ENCODE measurements at regions of chr1 and their contacts with region 1.

Region 1: GRCh38 chr1:156480411-156481192 is 20.0 kb downstream of the MEF2D start:
- DNase-seq: peak; percentile 55
- H3K4me3 ChIP-seq: no peak overlapping the region
- H3K27ac ChIP-seq: no peak overlapping the region
- H3K4me1 ChIP-seq: peaks cover 8% of the 10 kb centered on the region
- H3K27me3 ChIP-seq: no peaks in the 10 kb centered on the region
- CTCF ChIP-seq: peak; percentile 67 to 87
- POLR2A ChIP-seq: no peak

Region 2: DNA sequence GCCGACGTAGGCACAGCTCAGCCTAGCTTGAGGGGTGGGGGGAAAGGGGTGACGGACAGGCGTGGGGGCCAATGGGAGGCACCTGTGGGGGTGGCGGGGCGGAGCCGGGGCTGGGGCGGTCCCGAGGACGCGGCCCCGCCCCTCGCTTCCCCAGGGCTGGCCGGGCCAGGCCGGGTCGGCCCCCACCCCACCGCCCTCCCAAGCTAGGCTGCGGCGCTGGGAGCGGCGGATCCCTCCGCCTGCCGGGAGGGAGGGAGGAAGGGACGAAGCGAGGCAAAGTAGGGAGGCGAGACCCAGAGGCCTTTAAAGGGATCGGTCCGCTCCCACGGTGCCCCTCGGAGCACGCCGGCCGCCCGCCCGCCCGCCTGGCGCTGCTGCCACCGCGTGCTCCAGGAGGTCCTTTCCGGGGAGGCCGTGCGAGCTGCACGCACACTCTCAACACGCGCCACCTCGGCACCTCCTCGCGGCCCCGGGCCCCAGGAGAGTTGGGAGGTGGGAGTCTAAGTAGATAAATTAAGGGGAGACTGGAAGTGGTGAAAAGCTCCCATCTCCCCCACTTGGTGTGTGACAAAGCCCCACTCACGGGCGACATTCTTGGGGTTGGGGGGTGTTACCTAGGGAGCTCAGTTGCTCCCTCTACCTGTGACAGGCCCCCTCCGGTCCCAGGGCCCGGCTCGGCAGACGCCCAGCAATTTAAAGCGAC is 20.3 kb after region 1 on chr1:
- CTCF ChIA-PET with region 1: interaction called, 149 read pairs
- POLR2A ChIA-PET with region 1: interaction called, 16 read pairs
- dilution Hi-C with region 1: no loop called
- intact Hi-C with region 1: loop called (anchors 1 kb)
- DNase-seq: peak; percentile 94
- H3K4me3 ChIP-seq: peak overlapping the region; percentile 76 to 95 (median 88)
- H3K27ac ChIP-seq: peak overlapping the region; percentile 100
- H3K4me1 ChIP-seq: peaks cover 63% of the 10 kb centered on the region
- H3K27me3 ChIP-seq: no peaks in the 10 kb centered on the region
- CTCF ChIP-seq: peak; percentile 48 to 49
- POLR2A ChIP-seq: peak; percentile 70

Region 3: GRCh38 chr1:156524481-156524869 is 43.9 kb after region 1 on chr1:
- CTCF ChIA-PET with region 1: interaction called, 44 read pairs
- POLR2A ChIA-PET with region 1: no interaction called
- dilution Hi-C with region 1: no loop called
- intact Hi-C with region 1: loop called (anchors 5 kb)
- DNase-seq: no peak
- H3K4me3 ChIP-seq: no peak overlapping the region
- H3K27ac ChIP-seq: no peak overlapping the region
- H3K4me1 ChIP-seq: no peaks in the 10 kb centered on the region
- H3K27me3 ChIP-seq: no peaks in the 10 kb centered on the region
- CTCF ChIP-seq: no peak
- POLR2A ChIP-seq: no peak

Region 4: DNA sequence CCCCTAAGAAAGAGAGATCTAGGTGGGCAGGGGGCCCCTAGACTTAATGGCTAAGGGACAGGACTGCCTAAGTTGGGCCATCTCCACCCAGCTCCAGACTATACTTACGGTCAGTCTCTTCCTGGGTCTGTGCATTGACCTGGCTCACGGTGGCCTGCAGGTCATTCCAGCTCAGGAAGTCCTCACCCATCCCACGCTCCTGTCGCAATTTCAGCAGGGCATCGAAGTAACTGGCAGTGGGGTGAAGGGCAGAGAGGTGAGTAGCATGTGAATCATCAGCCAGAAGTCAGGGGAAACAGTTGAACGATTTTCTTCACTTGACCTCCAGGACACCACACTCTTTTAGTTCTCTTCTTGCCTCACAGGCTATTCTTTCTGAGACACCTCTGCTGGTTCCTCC is 71.3 kb after region 1 on chr1:
- CTCF ChIA-PET with region 1: interaction called, 14 read pairs
- POLR2A ChIA-PET with region 1: no interaction called
- dilution Hi-C with region 1: no loop called
- intact Hi-C with region 1: no loop called
- DNase-seq: no peak
- H3K4me3 ChIP-seq: no peak overlapping the region
- H3K27ac ChIP-seq: no peak overlapping the region
- H3K4me1 ChIP-seq: no peaks in the 10 kb centered on the region
- H3K27me3 ChIP-seq: no peaks in the 10 kb centered on the region
- CTCF ChIP-seq: no peak
- POLR2A ChIP-seq: no peak

Region 5: GRCh38 chr1:156583821-156584622 is 103.4 kb after region 1 on chr1:
- CTCF ChIA-PET with region 1: interaction called, 25 read pairs
- POLR2A ChIA-PET with region 1: no interaction called
- dilution Hi-C with region 1: no loop called
- intact Hi-C with region 1: no loop called
- DNase-seq: peak; percentile 82
- H3K4me3 ChIP-seq: no peak overlapping the region
- H3K27ac ChIP-seq: no peak overlapping the region
- H3K4me1 ChIP-seq: no peaks in the 10 kb centered on the region
- H3K27me3 ChIP-seq: no peaks in the 10 kb centered on the region
- CTCF ChIP-seq: peak; percentile 68 to 90
- POLR2A ChIP-seq: no peak

Region 6: GRCh38 chr1:156661932-156662587 is 181.5 kb after region 1 on chr1:
- CTCF ChIA-PET with region 1: no interaction called
- POLR2A ChIA-PET with region 1: no interaction called
- dilution Hi-C with region 1: no loop called
- intact Hi-C with region 1: no loop called
- DNase-seq: no peak
- H3K4me3 ChIP-seq: no peak overlapping the region
- H3K27ac ChIP-seq: peak overlapping the region; percentile 85
- H3K4me1 ChIP-seq: peaks cover 66% of the 10 kb centered on the region
- H3K27me3 ChIP-seq: peaks cover 0 to 2% of the 10 kb centered on the region in 2 experiments
- CTCF ChIP-seq: no peak
- POLR2A ChIP-seq: no peak

Region 7: GRCh38 chr1:156725683-156726280 is 245.2 kb after region 1 on chr1:
- CTCF ChIA-PET with region 1: no interaction called
- POLR2A ChIA-PET with region 1: no interaction called
- dilution Hi-C with region 1: no loop called
- intact Hi-C with region 1: no loop called
- DNase-seq: peak; percentile 86
- H3K4me3 ChIP-seq: peak overlapping the region; percentile 3 to 79 (median 18)
- H3K27ac ChIP-seq: no peak overlapping the region
- H3K4me1 ChIP-seq: peaks cover 32% of the 10 kb centered on the region
- H3K27me3 ChIP-seq: no peaks in the 10 kb centered on the region
- CTCF ChIP-seq: peak; percentile 98 to 99
- POLR2A ChIP-seq: no peak